Activated naive CD4-positive, alpha-beta T cell treated with anti-CD3 and anti-CD28 coated beads, Interleukin-2, amount 10 ng/mL, durations not matched to agents 7 days and 5 days (primary cell): ENCODE measurements at regions of chr2 and their contacts with region 1.

Region 1: GRCh38 chr2:217785544-217786045 is 217.2 kb downstream of the TNS1 start:
- DNase-seq: peak; percentile 79
- H3K4me3 Mint-ChIP-seq: no peak overlapping the region
- H3K27ac Mint-ChIP-seq: no peak overlapping the region
- H3K4me1 Mint-ChIP-seq: peaks cover 23% of the 10 kb centered on the region
- H3K27me3 Mint-ChIP-seq: peaks cover 5% of the 10 kb centered on the region

Region 2: GRCh38 chr2:217527590-217528202 is 257.9 kb before region 1 on chr2:
- CTCF ChIA-PET with region 1: no interaction called
- DNase-seq: no peak
- H3K4me3 Mint-ChIP-seq: no peak overlapping the region
- H3K27ac Mint-ChIP-seq: no peak overlapping the region
- H3K4me1 Mint-ChIP-seq: no peaks in the 10 kb centered on the region
- H3K27me3 Mint-ChIP-seq: no peaks in the 10 kb centered on the region

Region 3: DNA sequence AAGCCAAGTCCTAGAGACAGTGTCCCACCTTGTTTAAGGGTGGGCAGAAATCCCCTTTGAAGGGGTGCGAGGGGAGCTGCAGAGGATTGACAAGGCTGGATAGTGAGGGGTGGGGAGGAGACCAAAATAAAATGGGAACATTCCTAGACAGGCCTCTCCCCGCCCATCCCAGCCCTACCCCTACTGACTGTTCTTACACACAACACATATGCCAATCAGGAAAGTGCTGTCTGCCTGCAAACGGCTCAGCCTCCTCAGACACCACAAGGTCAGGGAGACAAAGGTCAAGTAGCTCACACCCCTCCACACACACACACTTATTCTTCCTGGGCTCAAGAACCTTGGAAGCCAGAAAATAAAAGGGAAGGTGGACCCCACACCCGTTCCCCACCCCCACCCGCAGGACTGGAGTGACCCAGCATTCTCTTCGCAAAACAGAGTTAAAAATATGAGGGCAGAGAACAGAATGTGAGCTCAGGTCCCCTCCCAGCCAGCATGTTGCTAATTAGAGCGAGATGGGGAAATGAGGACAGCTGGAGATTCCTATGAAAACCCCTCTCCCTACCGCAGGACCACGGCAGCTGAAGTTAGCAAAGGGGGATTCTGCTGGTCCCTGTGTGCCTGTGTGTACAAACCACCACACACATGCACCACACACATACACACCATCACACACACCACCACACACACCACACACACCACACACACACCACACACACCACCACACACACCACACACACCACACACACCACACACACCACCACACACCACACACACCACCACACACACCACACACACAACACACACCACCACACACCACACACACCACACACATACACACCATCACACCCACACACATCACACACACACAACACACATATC is 19.4 kb after region 1 on chr2:
- CTCF ChIA-PET with region 1: interaction called, 10 read pairs
- DNase-seq: no peak
- H3K4me3 Mint-ChIP-seq: no peak overlapping the region
- H3K27ac Mint-ChIP-seq: no peak overlapping the region
- H3K4me1 Mint-ChIP-seq: no peaks in the 10 kb centered on the region
- H3K27me3 Mint-ChIP-seq: peaks cover 4% of the 10 kb centered on the region

Region 4: DNA sequence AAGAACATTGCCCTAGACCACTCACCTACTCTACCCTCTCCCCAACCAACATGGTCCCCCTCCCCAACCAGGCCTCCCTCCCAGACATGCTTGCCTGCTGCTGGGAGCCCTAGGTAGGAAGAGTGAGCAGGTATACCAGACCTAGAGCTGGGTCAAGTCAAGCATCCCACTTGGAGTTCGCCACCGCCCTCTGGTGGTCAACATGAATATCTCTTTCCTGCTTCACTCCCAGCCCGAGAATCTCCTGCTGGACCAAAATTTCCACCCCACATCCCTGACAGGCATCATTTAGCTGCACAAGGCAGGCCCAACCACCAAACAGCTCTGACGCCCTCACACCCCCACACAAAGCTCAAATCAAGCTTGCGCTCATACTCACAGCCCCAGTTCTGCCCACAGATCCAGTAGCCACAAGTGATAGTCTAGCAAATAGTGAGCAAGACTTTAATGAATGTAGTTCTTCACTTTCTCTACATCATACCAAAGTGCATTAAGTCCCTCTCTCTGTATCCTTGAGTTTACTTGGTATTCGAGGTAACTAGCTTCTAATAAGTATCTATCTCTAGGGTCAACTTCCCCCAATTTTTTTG is 101.2 kb after region 1 on chr2:
- CTCF ChIA-PET with region 1: interaction called, 260 read pairs
- DNase-seq: peak; percentile 79
- H3K4me3 Mint-ChIP-seq: no peak overlapping the region
- H3K27ac Mint-ChIP-seq: no peak overlapping the region
- H3K4me1 Mint-ChIP-seq: no peaks in the 10 kb centered on the region
- H3K27me3 Mint-ChIP-seq: peaks cover 16% of the 10 kb centered on the region

Region 5: DNA sequence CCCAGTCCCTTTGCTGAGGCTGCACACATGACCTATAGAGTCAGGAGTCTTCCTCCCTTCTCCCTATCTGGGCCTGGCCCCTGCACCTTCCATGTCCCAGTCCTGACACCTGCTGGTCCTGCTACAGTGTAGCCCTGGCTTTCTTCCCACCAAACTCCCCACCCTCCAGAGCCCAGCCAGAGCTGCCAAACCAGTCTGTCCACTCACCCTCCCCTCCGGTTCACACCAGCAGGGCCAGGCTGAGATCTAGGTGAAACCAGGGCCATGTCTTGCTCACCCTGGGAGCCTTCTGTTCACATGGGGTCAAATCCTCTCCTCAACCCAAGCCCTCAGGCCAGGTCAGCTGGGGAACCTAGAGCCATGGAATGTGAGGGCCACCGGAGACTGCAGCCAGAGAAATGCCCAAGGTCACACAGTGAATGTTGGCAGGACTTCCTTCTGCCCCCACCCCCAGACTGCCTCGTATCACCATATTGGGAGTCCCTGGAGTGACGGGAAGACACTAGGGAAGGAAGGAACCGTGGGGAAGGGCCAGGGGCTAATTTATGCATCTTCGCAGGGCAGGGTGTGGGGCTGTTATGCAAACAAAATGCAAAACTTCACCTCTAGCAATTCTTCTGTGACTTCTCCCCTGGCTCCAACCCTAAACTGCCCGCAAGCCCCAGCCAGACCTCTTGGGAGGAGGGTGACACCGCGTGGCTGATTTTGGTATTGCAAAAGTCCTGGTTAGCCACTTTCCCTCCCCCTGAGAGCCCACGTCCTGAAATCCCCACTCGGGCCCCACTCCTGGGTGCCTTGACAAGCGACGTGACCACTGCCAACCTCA is 202.6 kb after region 1 on chr2:
- CTCF ChIA-PET with region 1: interaction called, 96 read pairs
- DNase-seq: peak; percentile 82
- H3K4me3 Mint-ChIP-seq: no peak overlapping the region
- H3K27ac Mint-ChIP-seq: peak overlapping the region; percentile 28
- H3K4me1 Mint-ChIP-seq: no peaks in the 10 kb centered on the region
- H3K27me3 Mint-ChIP-seq: peaks cover 15% of the 10 kb centered on the region

Region 6: GRCh38 chr2:218033590-218034496 is 248.2 kb after region 1 on chr2:
- CTCF ChIA-PET with region 1: interaction called, 10 read pairs
- DNase-seq: peak; percentile 20
- H3K4me3 Mint-ChIP-seq: peak overlapping the region; percentile 1
- H3K27ac Mint-ChIP-seq: no peak overlapping the region
- H3K4me1 Mint-ChIP-seq: peaks cover 13% of the 10 kb centered on the region
- H3K27me3 Mint-ChIP-seq: peaks cover 30% of the 10 kb centered on the region